ENCODE measurements at regions of chr2 and their contacts with region 1.

Region 1: DNA sequence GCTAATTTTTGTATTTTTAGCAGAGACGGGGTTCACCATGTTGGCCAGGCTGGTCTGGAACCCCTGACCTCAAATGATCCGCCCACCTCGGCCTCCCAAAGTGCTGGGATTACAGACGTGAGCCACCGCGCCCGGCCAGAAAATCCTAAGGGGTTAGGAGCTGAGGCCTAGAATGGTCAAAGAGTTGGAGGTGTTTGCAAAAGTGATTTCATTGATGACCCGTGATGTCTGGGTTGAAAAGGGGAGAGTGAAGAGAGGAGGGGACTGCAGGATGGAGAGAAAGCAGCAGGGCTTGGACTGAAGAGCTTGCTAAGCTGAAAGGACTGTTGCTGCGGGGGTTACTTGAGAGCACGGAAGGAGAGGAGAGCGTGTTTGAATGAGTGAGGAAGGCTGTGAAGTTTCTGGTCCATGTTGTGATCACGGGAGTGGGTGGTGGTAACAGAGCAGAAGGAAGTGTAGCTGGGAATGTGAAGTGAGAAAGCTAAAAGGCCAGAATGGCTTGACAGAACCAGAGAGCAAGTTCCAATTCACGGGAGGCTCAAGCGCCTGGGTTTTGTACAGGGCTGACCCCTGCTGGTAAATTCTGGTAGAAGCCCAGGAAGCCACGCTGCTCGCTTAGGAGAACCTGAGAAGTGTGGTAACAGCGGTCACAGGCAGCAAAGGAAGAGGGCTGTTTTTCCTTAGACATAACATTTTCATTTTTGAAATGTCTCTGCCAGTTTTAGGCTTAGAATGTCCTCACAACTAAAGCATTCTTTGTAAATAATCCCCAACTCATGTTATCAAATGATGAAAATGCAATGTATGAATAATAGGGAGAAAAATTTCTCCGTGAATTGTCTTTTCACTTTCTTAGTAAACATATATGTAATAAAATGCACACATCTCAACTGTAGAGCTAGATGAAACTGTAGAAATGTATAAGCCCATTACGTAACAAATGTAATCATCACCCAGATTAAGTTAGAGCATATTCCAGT is 40.5 kb upstream of the ACTR2 start:
- DNase-seq: peak; percentile 81 to 85 (median 84)
- ATAC-seq: peak; percentile 92
- H3K4me3 ChIP-seq: no peak overlapping the region
- H3K27ac ChIP-seq: no peak overlapping the region
- H3K4me1 ChIP-seq: peaks cover 8% of the 10 kb centered on the region
- H3K27me3 ChIP-seq: no peaks in the 10 kb centered on the region
- CTCF ChIP-seq: peak; percentile 68 to 87 (median 78)
- POLR2A ChIP-seq: no peak

Region 2: DNA sequence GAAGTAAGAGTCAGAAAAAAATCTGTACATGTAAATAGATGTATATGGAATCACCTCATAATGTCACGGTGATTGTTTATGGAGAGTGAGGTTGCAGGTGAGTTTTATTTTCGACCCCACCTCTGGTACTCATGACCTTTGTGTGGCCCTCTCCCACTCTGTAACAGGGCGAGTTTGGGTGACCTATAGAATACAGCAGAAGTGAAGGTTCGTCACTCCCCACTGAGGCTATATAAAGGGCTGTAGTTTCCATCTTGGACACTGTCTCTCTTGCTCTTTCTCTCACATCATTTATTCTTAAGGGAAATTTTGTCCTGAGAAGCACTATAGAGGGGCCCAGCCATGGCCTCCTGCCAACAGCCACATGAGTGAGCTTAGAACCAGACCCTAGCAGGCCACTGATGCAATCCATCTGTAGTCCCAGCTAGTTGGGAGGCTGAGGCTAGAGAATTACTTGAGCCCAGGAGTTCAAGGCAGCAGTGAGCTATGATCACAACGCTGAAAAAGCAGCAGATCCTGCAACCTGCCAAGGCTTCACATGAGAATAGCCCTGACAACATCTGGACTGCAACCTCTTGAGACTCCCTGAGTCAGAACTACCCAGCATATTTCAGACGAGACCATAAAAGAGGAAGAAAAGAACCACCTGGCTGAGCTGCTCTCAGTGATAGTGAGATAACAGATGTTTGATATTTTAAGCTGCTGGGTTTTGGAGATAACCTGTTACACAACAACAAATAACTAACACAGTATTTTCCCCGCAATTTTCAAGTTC is 272.2 kb before region 1 on chr2:
- intact Hi-C with region 1: loop called (anchors 10 kb)
- DNase-seq: no peak
- ATAC-seq: no peak
- H3K4me3 ChIP-seq: no peak overlapping the region
- H3K27ac ChIP-seq: no peak overlapping the region
- H3K4me1 ChIP-seq: no peaks in the 10 kb centered on the region
- H3K27me3 ChIP-seq: no peaks in the 10 kb centered on the region
- CTCF ChIP-seq: no peak
- POLR2A ChIP-seq: no peak

Region 3: DNA sequence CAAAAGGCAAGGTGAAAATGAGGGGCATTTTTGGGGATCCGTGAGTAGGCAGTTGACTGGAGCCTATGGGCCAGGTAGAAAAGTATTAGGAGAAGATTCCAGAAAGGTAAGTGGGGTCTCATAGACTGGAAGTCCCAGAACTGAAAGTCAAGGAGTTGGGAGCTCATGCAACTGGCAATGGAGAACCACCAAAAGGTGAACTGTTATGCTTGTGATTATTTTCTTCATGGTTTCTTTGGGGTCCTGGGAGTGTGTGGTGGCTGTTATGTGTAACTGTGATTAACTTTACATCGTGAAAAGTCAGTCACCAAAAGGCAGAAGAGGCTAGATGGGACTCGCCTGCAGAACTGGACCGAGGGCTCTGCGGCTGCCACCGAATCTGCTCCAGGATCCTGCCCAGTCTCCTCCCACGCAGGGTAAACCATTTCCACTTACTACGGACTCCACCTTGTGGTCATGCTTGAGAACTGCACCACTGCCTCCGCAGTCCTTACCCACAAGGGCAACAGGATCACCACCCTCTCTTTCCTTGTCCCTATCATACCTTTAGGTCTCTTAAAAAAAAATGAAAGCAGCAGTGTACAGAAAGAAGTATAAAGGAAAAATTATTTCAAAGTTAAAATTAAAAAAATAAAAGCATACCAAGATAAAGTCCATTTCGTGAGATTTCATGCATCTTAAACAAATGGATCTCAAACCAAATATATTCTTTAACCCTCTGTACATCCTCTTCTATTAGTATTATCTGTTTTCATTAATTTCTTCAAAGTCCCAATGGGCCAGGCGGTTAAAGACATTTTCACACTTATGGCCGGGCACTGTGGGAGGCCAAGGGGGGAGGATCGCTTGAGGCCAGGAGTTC is 146.5 kb before region 1 on chr2:
- intact Hi-C with region 1: loop called (anchors 5 kb)
- DNase-seq: peak; percentile 88 to 92 (median 90)
- ATAC-seq: peak; percentile 99
- H3K4me3 ChIP-seq: no peak overlapping the region
- H3K27ac ChIP-seq: no peak overlapping the region
- H3K4me1 ChIP-seq: peaks cover 2% of the 10 kb centered on the region
- H3K27me3 ChIP-seq: no peaks in the 10 kb centered on the region
- CTCF ChIP-seq: peak; percentile 82 to 97 (median 96)
- POLR2A ChIP-seq: no peak